HCT116 (cell line): ENCODE measurements at regions of chr17 and their contacts with region 1.

Region 1: GRCh38 chr17:2511462-2512369 is at the start of gene METTL16:
- DNase-seq: peak; percentile 98
- ATAC-seq: peak; percentile 98
- H3K4me3 ChIP-seq: peak within 1 kb of the TSS; percentile 74 to 99
- H3K27ac ChIP-seq: peak within 1 kb of the TSS; percentile 78
- H3K4me1 ChIP-seq: peaks cover 2 to 12% of the 10 kb centered on the region in 2 experiments; a peak in 2 of 4 replicates
- H3K27me3 ChIP-seq: no peaks in the 10 kb centered on the region
- CTCF ChIP-seq: no peak
- POLR2A ChIP-seq: peak; percentile 47
- RAD21 ChIP-seq: no peak
- total RNA-seq, gene METTL16: 37.6 TPM

Region 2: GRCh38 chr17:2564878-2565277 is 53.2 kb after region 1 on chr17:
- CTCF ChIA-PET with region 1: no interaction called
- POLR2A ChIA-PET with region 1: no interaction called
- RAD21 ChIA-PET with region 1: no interaction called
- intact Hi-C with region 1: no loop called
- DNase-seq: peak; percentile 21
- ATAC-seq: peak; percentile 22; the same call in 1 of the 2 replicates
- H3K4me3 ChIP-seq: no peak overlapping the region
- H3K27ac ChIP-seq: no peak overlapping the region
- H3K4me1 ChIP-seq: peaks cover 3 to 10% of the 10 kb centered on the region in 2 experiments; a peak in 3 of 4 replicates
- H3K27me3 ChIP-seq: no peaks in the 10 kb centered on the region
- CTCF ChIP-seq: no peak
- POLR2A ChIP-seq: no peak
- RAD21 ChIP-seq: no peak

Region 3: DNA sequence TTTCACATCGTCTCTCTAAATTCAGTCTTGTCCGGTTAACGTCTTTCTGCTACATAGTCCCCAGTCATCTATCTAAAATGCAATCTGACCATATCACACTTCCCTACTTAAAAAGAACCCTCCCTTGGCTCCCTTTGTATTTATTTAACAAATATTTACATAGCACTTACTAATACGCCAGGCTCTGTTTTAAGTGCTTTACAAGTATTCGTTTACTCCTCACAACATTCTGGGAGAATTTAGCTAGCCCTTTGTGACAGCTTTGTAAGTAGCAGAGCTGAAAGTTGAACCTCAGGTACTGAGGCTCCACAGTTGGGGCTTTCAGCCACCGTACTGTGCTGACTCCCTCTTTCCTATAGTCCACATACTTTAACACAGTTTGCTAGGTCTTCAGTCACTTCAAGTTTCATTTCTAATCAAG is 90.9 kb after region 1 on chr17:
- CTCF ChIA-PET with region 1: no interaction called
- POLR2A ChIA-PET with region 1: no interaction called
- RAD21 ChIA-PET with region 1: no interaction called
- intact Hi-C with region 1: no loop called
- DNase-seq: no peak
- ATAC-seq: no peak
- H3K4me3 ChIP-seq: no peak overlapping the region
- H3K27ac ChIP-seq: no peak overlapping the region
- H3K4me1 ChIP-seq: peaks cover 0 to 6% of the 10 kb centered on the region in 2 experiments; a peak in 1 of 4 replicates
- H3K27me3 ChIP-seq: no peaks in the 10 kb centered on the region
- CTCF ChIP-seq: no peak
- POLR2A ChIP-seq: no peak
- RAD21 ChIP-seq: no peak

Region 4: DNA sequence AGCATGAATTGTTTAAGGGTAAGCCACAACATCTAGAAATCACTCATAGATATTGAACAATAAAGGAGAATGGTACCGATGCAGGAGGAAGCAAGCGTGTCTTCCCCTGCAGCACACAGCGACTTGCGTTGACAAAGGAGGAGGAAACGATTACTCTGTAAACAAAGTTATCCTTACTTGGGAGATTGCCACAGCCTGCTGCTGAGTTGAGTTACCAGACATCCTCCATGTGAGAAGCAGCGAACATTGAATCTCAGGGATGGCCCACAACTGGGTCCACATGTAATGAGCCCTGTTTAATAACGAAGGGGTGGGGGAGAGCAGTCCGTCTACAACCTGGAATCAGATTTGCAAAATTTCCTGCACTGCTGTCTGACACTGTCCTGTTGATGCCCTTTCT is 172.2 kb after region 1 on chr17:
- CTCF ChIA-PET with region 1: no interaction called
- POLR2A ChIA-PET with region 1: no interaction called
- RAD21 ChIA-PET with region 1: no interaction called
- intact Hi-C with region 1: loop called (anchors 5 kb)
- DNase-seq: no peak
- ATAC-seq: no peak
- H3K4me3 ChIP-seq: no peak overlapping the region
- H3K27ac ChIP-seq: no peak overlapping the region
- H3K4me1 ChIP-seq: no peaks in the 10 kb centered on the region
- H3K27me3 ChIP-seq: no peaks in the 10 kb centered on the region
- CTCF ChIP-seq: no peak
- POLR2A ChIP-seq: no peak
- RAD21 ChIP-seq: no peak